Activated CD4-positive, alpha-beta memory T cell treated with anti-CD3 and anti-CD28 coated beads for 36 hours (primary cell): ENCODE measurements at regions of chr19 and their contacts with region 1.

Region 1: DNA sequence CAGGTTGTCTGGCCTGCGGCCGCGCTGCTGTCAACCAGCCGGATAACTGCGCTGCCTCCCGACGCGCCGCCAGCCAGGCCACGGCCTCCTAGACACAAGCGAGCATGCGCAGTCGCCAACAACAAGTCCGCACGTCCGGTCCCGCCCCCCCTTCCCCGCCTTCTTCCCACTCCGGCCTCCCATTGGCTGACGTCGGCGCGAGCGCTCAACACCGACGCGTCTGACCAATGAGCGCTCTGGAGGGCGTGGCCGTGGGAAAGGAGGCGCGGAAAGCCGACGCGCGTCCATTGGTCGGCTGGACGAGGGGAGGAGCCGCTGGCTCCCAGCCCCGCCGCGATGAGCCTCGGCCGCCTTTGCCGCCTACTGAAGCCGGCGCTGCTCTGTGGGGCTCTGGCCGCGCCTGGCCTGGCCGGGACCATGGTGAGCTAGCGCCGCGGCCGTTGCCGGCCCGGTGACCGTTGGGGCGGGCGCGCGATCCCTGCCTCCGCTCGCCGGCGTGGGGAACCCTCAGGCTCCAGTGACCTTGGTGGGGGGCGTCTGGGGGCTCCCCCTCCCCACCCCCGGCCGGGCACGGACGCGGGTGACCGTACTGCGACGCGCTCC is at the start of gene GPX4:
- DNase-seq: peak; percentile 99
- H3K4me3 Mint-ChIP-seq: peak within 1 kb of the TSS; percentile 75
- H3K27ac Mint-ChIP-seq: peak within 1 kb of the TSS; percentile 89
- H3K4me1 Mint-ChIP-seq: peaks cover 50% of the 10 kb centered on the region
- H3K27me3 Mint-ChIP-seq: no peaks in the 10 kb centered on the region
- total RNA-seq, gene GPX4: 274 to 275 TPM

Region 2: GRCh38 chr19:1020868-1021425 is 82.9 kb before region 1 on chr19 and contains the start of gene TMEM259:
- CTCF ChIA-PET with region 1: no interaction called
- POLR2A ChIA-PET with region 1: interaction called, 8 read pairs
- intact Hi-C with region 1: loop called (anchors 1 kb)
- DNase-seq: peak; percentile 98
- H3K4me3 Mint-ChIP-seq: peak within 1 kb of the TSS; percentile 95
- H3K27ac Mint-ChIP-seq: peak within 1 kb of the TSS; percentile 99
- H3K4me1 Mint-ChIP-seq: peaks cover 43% of the 10 kb centered on the region
- H3K27me3 Mint-ChIP-seq: peaks cover 3% of the 10 kb centered on the region
- total RNA-seq, gene TMEM259: 107 to 109 TPM

Region 3: DNA sequence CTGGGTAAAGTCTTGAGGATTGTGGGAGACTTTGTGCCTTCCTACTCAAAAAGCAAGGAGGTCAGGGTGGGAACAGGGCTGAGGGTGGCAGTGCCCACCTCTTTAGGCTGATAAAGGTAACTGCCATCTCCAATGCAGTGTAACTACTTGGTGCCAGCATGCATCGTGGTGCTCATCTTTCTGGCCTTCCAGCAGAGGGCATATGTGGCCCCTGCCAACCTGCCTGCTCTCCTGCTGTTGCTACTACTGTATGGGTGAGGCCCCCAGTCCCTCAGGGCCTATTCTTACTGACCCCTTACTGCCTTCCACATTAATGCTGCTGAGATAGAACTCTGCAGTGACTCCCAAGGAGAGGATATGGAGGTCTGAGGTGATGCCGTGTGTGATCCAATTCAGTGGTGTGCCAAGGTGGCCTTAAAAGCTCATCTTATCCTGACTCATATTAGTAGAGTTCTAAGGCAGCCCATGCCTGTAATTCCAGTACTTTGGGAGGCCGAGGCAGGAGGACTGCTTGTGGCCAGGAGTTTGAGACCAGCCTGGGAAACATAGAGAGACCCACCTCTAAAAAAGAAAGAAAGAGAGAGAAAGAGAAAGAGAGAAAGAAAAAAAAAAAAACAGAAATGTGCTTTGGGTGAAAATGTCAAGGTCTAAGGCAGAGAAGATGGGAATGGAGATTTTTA is 46.5 kb before region 1 on chr19:
- CTCF ChIA-PET with region 1: no interaction called
- POLR2A ChIA-PET with region 1: no interaction called
- intact Hi-C with region 1: no loop called
- DNase-seq: peak; percentile 62
- H3K4me3 Mint-ChIP-seq: no peak overlapping the region
- H3K27ac Mint-ChIP-seq: peak overlapping the region; percentile 40
- H3K4me1 Mint-ChIP-seq: peaks cover 11% of the 10 kb centered on the region
- H3K27me3 Mint-ChIP-seq: no peaks in the 10 kb centered on the region

Region 4: GRCh38 chr19:1074544-1075283 is 29.1 kb before region 1 on chr19:
- CTCF ChIA-PET with region 1: interaction called, 3 read pairs
- POLR2A ChIA-PET with region 1: interaction called, 3 read pairs
- intact Hi-C with region 1: loop called (anchors 1 kb)
- DNase-seq: peak; percentile 91
- H3K4me3 Mint-ChIP-seq: peak overlapping the region; percentile 55
- H3K27ac Mint-ChIP-seq: peak overlapping the region; percentile 90
- H3K4me1 Mint-ChIP-seq: peaks cover 61% of the 10 kb centered on the region
- H3K27me3 Mint-ChIP-seq: no peaks in the 10 kb centered on the region

Region 5: GRCh38 chr19:1131738-1132551 is 28.1 kb after region 1 on chr19:
- CTCF ChIA-PET with region 1: no interaction called
- POLR2A ChIA-PET with region 1: interaction called, 23 read pairs
- intact Hi-C with region 1: loop called (anchors 2 kb)
- DNase-seq: peak; percentile 96
- H3K4me3 Mint-ChIP-seq: peak overlapping the region; percentile 94
- H3K27ac Mint-ChIP-seq: peak overlapping the region; percentile 96
- H3K4me1 Mint-ChIP-seq: peaks cover 44% of the 10 kb centered on the region
- H3K27me3 Mint-ChIP-seq: no peaks in the 10 kb centered on the region